ENCODE measurements at regions of chr4 and their contacts with region 1.

Region 1: DNA sequence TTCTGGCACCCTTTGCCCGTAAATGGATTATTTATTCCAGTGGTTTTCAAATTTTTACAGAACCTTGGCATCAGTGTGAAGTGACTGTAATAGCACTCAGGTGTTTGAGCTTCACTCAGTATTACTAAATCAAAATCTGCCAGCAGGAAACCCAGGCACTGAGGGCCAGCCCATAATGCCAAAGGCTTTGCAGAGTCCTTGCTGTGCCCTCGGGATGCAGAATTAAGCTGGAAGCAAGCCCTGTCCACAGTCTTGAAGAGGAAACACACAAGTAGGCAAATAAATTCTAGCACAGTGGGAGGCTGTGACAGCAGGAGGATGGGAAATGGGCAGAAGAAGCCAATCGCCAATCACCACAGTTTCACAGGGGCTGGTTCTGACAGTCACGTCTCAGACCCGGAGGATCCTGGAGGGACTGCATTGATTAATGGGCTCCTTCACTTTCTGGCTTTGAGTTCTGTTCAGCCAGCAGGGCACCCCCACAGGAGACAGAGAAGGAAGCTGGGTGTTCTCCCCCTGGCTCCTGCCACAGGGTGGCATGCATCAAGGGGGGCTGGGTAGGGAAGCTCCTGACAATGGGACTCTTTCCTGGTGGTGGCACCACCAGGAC is 138.8 kb downstream of the MTNR1A start:
- DNase-seq: no peak
- ATAC-seq: no peak
- H3K4me3 ChIP-seq: no peak overlapping the region
- H3K27ac ChIP-seq: no peak overlapping the region
- H3K4me1 ChIP-seq: no peaks in the 10 kb centered on the region
- H3K27me3 ChIP-seq: peaks cover 12% of the 10 kb centered on the region; the same call in 1 of the 2 replicates
- CTCF ChIP-seq: no peak
- POLR2A ChIP-seq: no peak
- RAD21 ChIP-seq: no peak

Region 2: GRCh38 chr4:186494496-186494895 is 77.9 kb after region 1 on chr4:
- CTCF ChIA-PET with region 1: no interaction called
- POLR2A ChIA-PET with region 1: no interaction called
- RAD21 ChIA-PET with region 1: no interaction called
- intact Hi-C with region 1: loop called (anchors 1 kb)
- DNase-seq: no peak
- ATAC-seq: no peak
- H3K4me3 ChIP-seq: no peak overlapping the region
- H3K27ac ChIP-seq: no peak overlapping the region
- H3K4me1 ChIP-seq: no peaks in the 10 kb centered on the region
- H3K27me3 ChIP-seq: no peaks in the 10 kb centered on the region
- CTCF ChIP-seq: no peak
- POLR2A ChIP-seq: no peak
- RAD21 ChIP-seq: no peak